ENCODE measurements at regions of chr22 and their contacts with region 1.

Region 1: GRCh38 chr22:49929208-49930136 is 11.0 kb downstream of the CRELD2 start:
- DNase-seq: peak; percentile 63
- H3K4me3 ChIP-seq: no peak overlapping the region
- H3K27ac ChIP-seq: no peak overlapping the region
- H3K4me1 ChIP-seq: peaks cover 11% of the 10 kb centered on the region
- H3K27me3 ChIP-seq: no peaks in the 10 kb centered on the region
- CTCF ChIP-seq: peak; percentile 69

Region 2: GRCh38 chr22:49767355-49768062 is 162.0 kb before region 1 on chr22:
- intact Hi-C with region 1: loop called (anchors 5 kb)
- DNase-seq: no peak
- H3K4me3 ChIP-seq: no peak overlapping the region
- H3K27ac ChIP-seq: no peak overlapping the region
- H3K4me1 ChIP-seq: no peaks in the 10 kb centered on the region
- H3K27me3 ChIP-seq: no peaks in the 10 kb centered on the region
- CTCF ChIP-seq: peak; percentile 70

Region 3: DNA sequence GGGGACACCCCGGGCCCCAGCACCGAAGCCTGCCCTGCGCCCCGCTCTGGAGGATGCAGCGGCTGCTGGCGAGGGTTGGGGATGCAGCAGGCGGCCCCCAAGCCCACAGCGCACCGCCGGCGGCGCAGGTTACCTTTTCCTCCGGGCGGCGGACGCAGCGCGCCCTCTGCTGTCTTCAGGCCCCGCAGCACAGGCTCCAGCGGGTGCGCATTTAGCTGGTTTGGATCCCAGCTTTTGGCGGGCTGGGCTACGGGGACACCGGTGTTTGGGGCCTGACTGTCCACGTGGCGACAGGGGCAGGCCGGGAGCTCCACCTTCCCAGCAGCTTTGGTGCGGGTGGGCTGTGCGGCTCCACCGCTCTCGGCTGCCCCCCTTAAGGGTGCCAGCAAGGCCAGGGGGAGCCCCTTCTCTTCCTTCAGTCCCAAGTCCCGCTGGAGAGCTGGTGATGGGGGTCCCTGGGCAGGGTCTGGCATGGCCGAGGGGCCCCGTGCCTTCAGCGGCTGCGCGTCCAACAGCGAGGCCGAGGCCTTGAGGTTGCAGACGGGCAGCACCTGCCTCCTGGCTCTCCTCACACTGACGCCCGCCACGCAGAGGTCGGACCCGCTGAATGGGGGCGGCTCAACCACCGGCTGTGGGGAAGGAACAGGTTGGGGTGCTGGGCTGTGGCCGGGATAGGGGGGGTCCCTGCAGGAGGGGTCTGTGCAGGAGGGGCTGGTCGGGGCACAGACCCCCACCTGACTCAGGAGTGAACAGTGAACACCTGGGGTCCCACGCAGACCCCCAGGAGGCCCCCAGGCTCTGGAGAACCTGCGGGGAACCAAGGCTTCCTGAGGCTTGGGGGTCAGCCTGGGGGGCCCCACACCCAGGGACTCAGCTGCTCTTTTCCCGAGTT is 101.1 kb after region 1 on chr22:
- intact Hi-C with region 1: loop called (anchors 2 kb)
- DNase-seq: peak; percentile 71
- H3K4me3 ChIP-seq: no peak overlapping the region
- H3K27ac ChIP-seq: no peak overlapping the region
- H3K4me1 ChIP-seq: no peaks in the 10 kb centered on the region
- H3K27me3 ChIP-seq: peaks cover 5% of the 10 kb centered on the region
- CTCF ChIP-seq: peak; percentile 81

Region 4: GRCh38 chr22:50148991-50149721 is 219.7 kb after region 1 on chr22:
- intact Hi-C with region 1: loop called (anchors 10 kb)
- DNase-seq: peak; percentile 61
- H3K4me3 ChIP-seq: no peak overlapping the region
- H3K27ac ChIP-seq: no peak overlapping the region
- H3K4me1 ChIP-seq: no peaks in the 10 kb centered on the region
- H3K27me3 ChIP-seq: no peaks in the 10 kb centered on the region
- CTCF ChIP-seq: peak; percentile 77

Measured in colonic mucosa (tissue), 4 donors.